H1 (cell line): ENCODE measurements at regions of chr11 and their contacts with region 1.

Region 1: GRCh38 chr11:116787786-116788486 is at the start of gene ZPR1:
- DNase-seq: peak in 1 of 2 experiments; percentile 89
- H3K4me3 ChIP-seq: peak within 1 kb of the TSS; percentile 79 to 93 (median 85)
- H3K27ac ChIP-seq: peak within 1 kb of the TSS; percentile 56; the same call in 1 of the 2 replicates
- H3K4me1 ChIP-seq: peaks cover 4 to 9% (median 6%) of the 10 kb centered on the region in 4 experiments
- H3K27me3 ChIP-seq: peaks cover 0 to 11% (median 3%) of the 10 kb centered on the region in 4 experiments; a peak in 4 of 7 replicates
- CTCF ChIP-seq: no peak; a peak in 1 of 4 replicates
- EP300 ChIP-seq: no peak
- POLR2A ChIP-seq: peak in 1 of 2 experiments; percentile 84; a peak in 2 of 3 replicates
- RAD21 ChIP-seq: no peak
- total RNA-seq, gene ZPR1: 70.5 and 81.2 TPM in 2 replicates

Region 2: GRCh38 chr11:116772443-116773202 is 15.3 kb before region 1 on chr11 and contains the start of gene BUD13:
- CTCF ChIA-PET with region 1: interaction called, 8 read pairs
- POLR2A ChIA-PET with region 1: interaction called, 29 read pairs
- DNase-seq: peak; percentile 50 to 96
- H3K4me3 ChIP-seq: peak within 1 kb of the TSS; percentile 76 to 96 (median 84)
- H3K27ac ChIP-seq: peak within 1 kb of the TSS; percentile 90
- H3K4me1 ChIP-seq: peaks cover 0 to 5% (median 3%) of the 10 kb centered on the region in 4 experiments; a peak in 2 of 7 replicates
- H3K27me3 ChIP-seq: no peaks in the 10 kb centered on the region
- CTCF ChIP-seq: no peak
- EP300 ChIP-seq: peak; percentile 26 to 40; a peak in 1 of 3 replicates
- POLR2A ChIP-seq: peak; percentile 20 to 96
- RAD21 ChIP-seq: no peak
- total RNA-seq, gene BUD13: 24.8 TPM in 2 replicates

Region 3: GRCh38 chr11:116798368-116798767 is 10.4 kb after region 1 on chr11:
- CTCF ChIA-PET with region 1: interaction called, 31 read pairs
- POLR2A ChIA-PET with region 1: interaction called, 4 read pairs
- DNase-seq: no peak
- H3K4me3 ChIP-seq: no peak overlapping the region
- H3K27ac ChIP-seq: no peak overlapping the region
- H3K4me1 ChIP-seq: 0 out of 7 replicates have a peak, but pooled peaks cover 0 to 3% (median 0%) of the 10 kb centered on the region in 4 experiments
- H3K27me3 ChIP-seq: no peaks in the 10 kb centered on the region
- CTCF ChIP-seq: no peak
- EP300 ChIP-seq: no peak
- POLR2A ChIP-seq: no peak
- RAD21 ChIP-seq: no peak

Region 4: DNA sequence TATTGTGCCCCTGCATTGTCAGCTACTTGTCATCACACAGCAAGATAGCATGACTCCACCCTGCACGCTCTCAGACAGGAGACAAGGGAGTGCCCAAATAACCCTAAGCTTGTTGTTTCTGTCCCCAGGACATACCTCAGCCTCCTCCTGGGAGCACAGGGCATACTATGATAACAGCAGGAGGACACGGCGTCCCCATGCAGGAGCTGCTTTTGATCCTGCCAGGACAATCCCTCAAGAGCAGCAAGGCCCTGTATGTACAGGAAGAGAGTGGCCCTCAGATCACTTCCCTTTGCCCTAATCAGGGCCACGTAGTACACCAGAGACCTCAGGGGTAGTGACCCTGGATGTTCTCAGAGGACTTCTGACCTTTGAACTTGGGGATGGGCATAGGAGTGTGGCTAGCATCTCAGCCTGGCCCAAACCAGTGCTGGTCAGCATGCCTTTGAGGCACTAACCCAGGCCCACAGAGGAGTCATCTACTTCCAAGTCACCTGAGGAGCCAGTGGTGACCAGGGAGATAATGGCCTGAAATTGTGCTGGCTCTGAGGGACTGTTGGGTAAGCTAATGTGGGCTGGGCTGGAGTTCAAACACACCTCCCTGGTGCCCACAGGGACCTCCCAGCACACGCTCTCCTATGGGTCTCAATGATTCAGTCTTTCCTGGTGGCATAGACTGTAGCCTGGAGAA is 26.0 kb after region 1 on chr11:
- CTCF ChIA-PET with region 1: interaction called, 11 read pairs
- POLR2A ChIA-PET with region 1: no interaction called
- DNase-seq: no peak
- H3K4me3 ChIP-seq: no peak overlapping the region
- H3K27ac ChIP-seq: no peak overlapping the region
- H3K4me1 ChIP-seq: no peaks in the 10 kb centered on the region
- H3K27me3 ChIP-seq: no peaks in the 10 kb centered on the region
- CTCF ChIP-seq: no peak
- EP300 ChIP-seq: no peak
- POLR2A ChIP-seq: no peak
- RAD21 ChIP-seq: no peak

Region 5: GRCh38 chr11:116821050-116821918 is 33.3 kb after region 1 on chr11:
- CTCF ChIA-PET with region 1: interaction called, 60 read pairs
- POLR2A ChIA-PET with region 1: no interaction called
- DNase-seq: no peak
- H3K4me3 ChIP-seq: no peak overlapping the region
- H3K27ac ChIP-seq: no peak overlapping the region
- H3K4me1 ChIP-seq: no peaks in the 10 kb centered on the region
- H3K27me3 ChIP-seq: no peaks in the 10 kb centered on the region
- CTCF ChIP-seq: no peak
- EP300 ChIP-seq: no peak
- POLR2A ChIP-seq: no peak
- RAD21 ChIP-seq: no peak

Region 6: GRCh38 chr11:116828632-116829524 is 40.9 kb after region 1 on chr11:
- CTCF ChIA-PET with region 1: interaction called, 237 read pairs
- POLR2A ChIA-PET with region 1: interaction called, 16 read pairs
- DNase-seq: no peak
- H3K4me3 ChIP-seq: no peak overlapping the region
- H3K27ac ChIP-seq: no peak overlapping the region
- H3K4me1 ChIP-seq: no peaks in the 10 kb centered on the region
- H3K27me3 ChIP-seq: no peaks in the 10 kb centered on the region
- CTCF ChIP-seq: no peak
- EP300 ChIP-seq: no peak
- POLR2A ChIP-seq: no peak
- RAD21 ChIP-seq: no peak

Region 7: DNA sequence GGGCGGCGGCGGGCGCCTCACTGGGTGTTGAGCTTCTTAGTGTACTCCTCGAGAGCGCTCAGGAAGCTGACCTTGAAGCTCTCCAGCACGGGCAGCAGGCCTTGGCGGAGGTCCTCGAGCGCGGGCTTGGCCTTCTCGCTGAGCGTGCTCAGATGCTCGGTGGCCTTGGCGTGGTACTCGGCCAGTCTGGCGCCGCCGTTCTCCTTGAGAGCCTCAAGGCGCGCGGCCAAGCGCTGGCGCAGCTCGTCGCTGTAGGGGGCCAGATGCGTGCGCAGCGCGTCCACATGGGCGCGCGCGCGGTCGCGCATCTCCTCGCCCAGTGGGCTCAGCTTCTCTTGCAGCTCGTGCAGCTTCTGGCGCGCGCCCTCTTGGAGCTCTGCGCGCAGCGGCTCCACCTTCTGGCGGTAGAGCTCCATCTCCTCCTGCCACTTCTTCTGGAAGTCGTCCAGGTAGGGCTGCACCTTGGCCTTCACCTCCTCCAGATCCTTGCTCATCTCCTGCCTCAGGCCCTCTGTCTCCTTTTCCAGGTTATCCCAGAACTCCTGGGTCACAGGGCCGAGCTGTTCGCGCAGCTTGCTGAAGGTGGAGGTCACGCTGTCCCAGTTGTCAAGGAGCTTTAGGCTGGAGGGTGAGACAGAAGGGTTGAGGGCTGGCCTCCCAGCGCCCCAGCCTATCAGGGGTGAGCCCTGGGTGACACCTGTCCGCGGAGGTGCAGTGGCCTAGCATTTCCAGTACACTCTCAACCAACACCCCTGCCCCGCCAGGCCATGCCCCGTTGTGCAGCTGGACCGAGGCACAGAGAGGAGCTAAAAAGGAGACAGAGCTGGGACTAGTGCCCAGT is 48.1 kb after region 1 on chr11:
- CTCF ChIA-PET with region 1: interaction called, 237 read pairs
- POLR2A ChIA-PET with region 1: interaction called, 16 read pairs
- DNase-seq: peak; percentile 83 to 87
- H3K4me3 ChIP-seq: peak overlapping the region; percentile 42 to 64 (median 50)
- H3K27ac ChIP-seq: no peak overlapping the region
- H3K4me1 ChIP-seq: peaks cover 0 to 24% (median 4%) of the 10 kb centered on the region in 4 experiments; a peak in 6 of 7 replicates
- H3K27me3 ChIP-seq: peaks cover 0 to 7% (median 5%) of the 10 kb centered on the region in 4 experiments; a peak in 3 of 7 replicates
- CTCF ChIP-seq: peak; percentile 74 to 77 (median 76)
- EP300 ChIP-seq: no peak
- POLR2A ChIP-seq: 0 out of 3 replicates have a peak, but pooled peaks of 1 of the 2 experiments have one; percentile 52
- RAD21 ChIP-seq: peak; percentile 65 to 72